HCT116 (cell line): ENCODE measurements at regions of chr11 and their contacts with region 1.

Region 1: GRCh38 chr11:10735481-10736475 is 15.3 kb upstream of the CTR9 start:
- DNase-seq: peak; percentile 96
- ATAC-seq: peak; percentile 95
- H3K4me3 ChIP-seq: peak overlapping the region; percentile 24 to 36
- H3K27ac ChIP-seq: peak overlapping the region; percentile 89
- H3K4me1 ChIP-seq: peaks cover 39 to 51% of the 10 kb centered on the region in 2 experiments
- H3K27me3 ChIP-seq: no peaks in the 10 kb centered on the region
- CTCF ChIP-seq: peak; percentile 95 to 99 (median 98)
- POLR2A ChIP-seq: no peak
- RAD21 ChIP-seq: peak; percentile 100

Region 2: DNA sequence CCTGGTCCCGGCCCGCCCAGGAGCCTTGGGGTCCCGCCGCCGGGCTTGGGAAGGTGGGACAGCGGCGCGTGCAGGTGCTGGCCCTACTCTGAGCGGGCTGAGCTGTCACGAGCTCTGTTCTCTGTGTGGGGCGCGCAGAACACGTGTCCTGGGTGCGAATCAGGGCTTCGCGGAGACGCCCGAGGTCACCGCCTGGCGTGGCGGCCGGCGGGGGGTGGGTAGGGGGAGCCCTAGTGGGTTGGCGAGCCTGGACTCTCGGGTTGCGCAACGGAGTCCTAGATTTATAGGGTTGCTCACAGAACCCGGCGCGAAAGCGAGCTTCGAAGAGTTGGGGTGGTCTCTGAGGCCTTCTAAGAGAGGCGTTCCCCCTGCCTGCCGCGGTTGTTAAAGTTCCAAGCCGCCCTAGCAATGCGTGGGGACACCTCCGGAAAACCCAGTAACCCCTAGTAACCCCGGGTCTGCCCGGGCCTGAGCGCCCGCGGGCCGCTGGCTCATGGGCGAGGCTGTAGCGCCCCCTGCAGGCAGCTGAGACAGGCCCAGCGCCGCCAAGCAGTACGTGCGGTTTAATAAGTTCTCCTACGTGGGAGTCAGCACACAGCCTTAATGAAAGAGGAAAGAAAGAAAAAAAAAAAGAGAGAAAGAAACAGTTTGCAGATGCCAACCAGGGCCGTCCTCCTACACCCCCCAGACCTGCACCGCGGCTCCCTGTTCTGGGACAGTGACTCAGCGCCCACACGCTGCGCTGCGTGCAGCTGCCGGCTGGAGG is 428.2 kb before region 1 on chr11:
- CTCF ChIA-PET with region 1: interaction called, 4 read pairs
- POLR2A ChIA-PET with region 1: no interaction called
- RAD21 ChIA-PET with region 1: interaction called in 1 of 2 experiments, 3 read pairs
- intact Hi-C with region 1: loop called (anchors 5 kb)
- DNase-seq: peak; percentile 84
- ATAC-seq: peak; percentile 41
- H3K4me3 ChIP-seq: peak overlapping the region; percentile 85 to 93
- H3K27ac ChIP-seq: peak overlapping the region; percentile 97
- H3K4me1 ChIP-seq: peaks cover 42 to 64% of the 10 kb centered on the region in 2 experiments
- H3K27me3 ChIP-seq: no peaks in the 10 kb centered on the region
- CTCF ChIP-seq: peak in 2 of 3 experiments; percentile 94 to 98; a peak in 4 of 6 replicates
- POLR2A ChIP-seq: peak; percentile 11
- RAD21 ChIP-seq: no peak

Region 3: GRCh38 chr11:10405855-10406592 is 329.8 kb before region 1 on chr11:
- CTCF ChIA-PET with region 1: interaction called, 18 read pairs
- POLR2A ChIA-PET with region 1: interaction called, 4 read pairs
- RAD21 ChIA-PET with region 1: interaction called, 5 to 7 read pairs
- intact Hi-C with region 1: loop called (anchors 1 kb)
- DNase-seq: peak; percentile 87
- ATAC-seq: peak; percentile 92
- H3K4me3 ChIP-seq: no peak overlapping the region
- H3K27ac ChIP-seq: peak overlapping the region; percentile 43; the same call in 1 of the 2 replicates
- H3K4me1 ChIP-seq: peaks cover 21 to 43% of the 10 kb centered on the region in 2 experiments
- H3K27me3 ChIP-seq: no peaks in the 10 kb centered on the region
- CTCF ChIP-seq: peak; percentile 78 to 98 (median 88)
- POLR2A ChIP-seq: no peak
- RAD21 ChIP-seq: peak; percentile 100

Region 4: DNA sequence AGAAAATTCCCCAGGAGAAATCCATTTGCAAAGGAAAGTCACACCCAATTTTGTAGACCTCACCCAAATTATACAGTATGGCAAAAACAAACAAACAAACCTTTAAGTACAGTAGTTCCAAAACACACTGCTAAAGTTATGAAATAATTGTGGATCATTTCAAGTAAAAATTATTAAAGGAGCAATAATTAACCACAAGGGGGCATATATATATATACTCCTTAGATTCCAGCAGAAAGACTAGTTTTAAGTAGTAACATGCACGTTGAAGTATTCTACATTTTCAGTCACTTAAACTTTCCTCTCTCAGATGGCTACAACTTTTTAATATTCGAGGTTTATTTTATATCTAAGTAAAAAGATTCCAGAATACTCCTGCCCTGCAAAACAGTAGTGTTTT is 221.6 kb before region 1 on chr11:
- CTCF ChIA-PET with region 1: interaction called, 4 read pairs
- POLR2A ChIA-PET with region 1: interaction called, 3 read pairs
- RAD21 ChIA-PET with region 1: no interaction called
- intact Hi-C with region 1: loop called (anchors 1 kb)
- DNase-seq: no peak
- ATAC-seq: no peak
- H3K4me3 ChIP-seq: no peak overlapping the region
- H3K27ac ChIP-seq: peak overlapping the region; percentile 63; the same call in 1 of the 2 replicates
- H3K4me1 ChIP-seq: peaks cover 23 to 55% of the 10 kb centered on the region in 2 experiments
- H3K27me3 ChIP-seq: no peaks in the 10 kb centered on the region
- CTCF ChIP-seq: peak; percentile 16 to 51 (median 39); a peak in 3 of 6 replicates
- POLR2A ChIP-seq: no peak
- RAD21 ChIP-seq: peak; percentile 47; the same call in 1 of the 2 replicates

Region 5: DNA sequence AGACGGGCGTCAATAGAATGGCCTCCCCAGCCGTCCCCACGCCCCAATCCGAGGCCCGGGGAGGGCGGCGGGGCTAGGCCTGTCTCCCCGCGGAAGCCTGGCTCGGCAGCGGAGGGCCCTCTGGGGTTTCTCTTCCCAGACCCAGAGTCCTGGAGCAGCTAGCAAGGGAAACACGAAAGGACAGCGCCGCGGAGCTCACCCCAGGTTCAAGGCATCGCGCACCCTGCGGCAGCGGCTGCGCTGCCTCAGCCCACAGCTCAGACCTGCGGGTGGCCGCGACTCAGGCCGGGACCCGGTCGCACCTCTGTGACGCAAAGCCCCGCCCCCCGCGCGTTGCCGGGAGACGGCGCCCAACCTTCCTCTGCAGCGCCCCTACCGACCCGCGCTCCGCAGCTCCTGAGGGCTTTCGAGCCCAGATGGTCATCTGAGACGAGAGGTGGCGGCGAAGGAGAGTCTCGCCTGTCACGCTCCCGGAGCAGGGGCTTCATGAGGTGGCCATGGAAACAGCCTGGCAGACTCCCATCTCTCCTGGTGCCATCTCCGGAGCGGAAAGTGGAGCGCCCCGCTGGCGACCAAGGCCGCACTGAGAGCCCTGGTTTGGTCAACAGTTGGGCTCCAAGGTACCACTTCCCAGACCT is 194.7 kb before region 1 on chr11 and contains the start of gene RNF141:
- CTCF ChIA-PET with region 1: interaction called, 12 read pairs
- POLR2A ChIA-PET with region 1: no interaction called
- RAD21 ChIA-PET with region 1: interaction called, 3 read pairs
- intact Hi-C with region 1: no loop called
- DNase-seq: peak; percentile 84
- ATAC-seq: peak; percentile 89
- H3K4me3 ChIP-seq: peak within 1 kb of the TSS; percentile 76 to 83
- H3K27ac ChIP-seq: peak within 1 kb of the TSS; percentile 94
- H3K4me1 ChIP-seq: peaks cover 40 to 54% of the 10 kb centered on the region in 2 experiments
- H3K27me3 ChIP-seq: no peaks in the 10 kb centered on the region
- CTCF ChIP-seq: peak; percentile 57 to 83 (median 67); a peak in 5 of 6 replicates
- POLR2A ChIP-seq: peak; percentile 91
- RAD21 ChIP-seq: peak; percentile 53
- total RNA-seq, gene RNF141: 133 TPM

Region 6: GRCh38 chr11:10659339-10660216 is 76.2 kb before region 1 on chr11:
- CTCF ChIA-PET with region 1: interaction called, 4 read pairs
- POLR2A ChIA-PET with region 1: interaction called, 3 read pairs
- RAD21 ChIA-PET with region 1: interaction called in 1 of 2 experiments, 3 read pairs
- intact Hi-C with region 1: loop called (anchors 1 kb)
- DNase-seq: peak; percentile 96
- ATAC-seq: peak; percentile 72
- H3K4me3 ChIP-seq: 0 out of 4 replicates have a peak overlapping the region, but pooled peaks of 1 of the 2 experiments have one; percentile 1
- H3K27ac ChIP-seq: peak overlapping the region; percentile 100
- H3K4me1 ChIP-seq: peaks cover 68 to 99% of the 10 kb centered on the region in 2 experiments
- H3K27me3 ChIP-seq: no peaks in the 10 kb centered on the region
- CTCF ChIP-seq: no peak
- POLR2A ChIP-seq: peak; percentile 55
- RAD21 ChIP-seq: no peak

Region 7: DNA sequence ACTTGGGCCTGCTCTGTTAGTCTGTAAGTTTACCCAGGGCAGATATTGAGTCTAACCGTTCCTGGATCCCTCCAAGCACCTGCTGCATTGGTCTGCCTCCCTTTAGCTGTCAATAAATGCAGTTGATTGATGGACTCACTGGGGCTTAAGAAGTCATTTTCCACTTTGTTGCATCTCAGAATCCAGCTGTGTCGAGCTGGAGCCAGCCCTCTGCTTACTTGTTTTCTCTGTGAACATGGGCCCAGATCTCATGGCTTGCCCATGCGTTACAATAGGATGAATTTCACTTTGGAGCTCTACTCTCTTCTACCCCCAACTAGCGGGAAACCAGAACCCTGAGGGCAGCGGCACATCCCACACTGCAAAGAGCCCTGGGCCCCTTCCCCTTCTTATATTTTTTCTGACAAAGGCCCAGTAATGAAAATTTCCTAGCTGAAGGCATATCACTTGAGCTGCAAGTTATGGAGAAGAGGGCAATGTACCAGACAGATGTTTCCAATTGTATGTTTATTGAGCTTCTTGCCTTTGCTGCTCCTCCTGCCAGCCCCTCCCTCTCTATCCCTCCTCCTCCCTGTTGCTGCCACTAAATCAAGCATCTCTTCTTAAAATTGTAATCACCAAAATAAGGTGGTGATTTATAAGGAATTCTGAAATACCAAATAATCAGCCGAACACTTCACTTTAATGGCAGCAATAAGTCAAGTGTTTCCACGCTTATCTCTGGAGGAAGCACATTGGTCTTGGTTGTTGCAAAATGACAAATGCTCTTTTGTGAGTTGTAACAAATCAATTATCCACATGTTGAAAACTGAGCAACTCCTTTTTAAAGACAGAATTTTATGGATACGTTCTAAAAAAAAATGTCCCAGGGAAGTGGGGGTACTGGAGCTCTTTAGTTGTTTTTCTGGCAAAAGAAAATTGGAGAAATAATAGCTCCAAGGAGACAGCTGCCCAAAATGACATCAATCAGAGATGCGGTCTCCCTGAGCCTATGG is 334.4 kb after region 1 on chr11:
- CTCF ChIA-PET with region 1: no interaction called
- POLR2A ChIA-PET with region 1: no interaction called
- RAD21 ChIA-PET with region 1: no interaction called
- intact Hi-C with region 1: no loop called
- DNase-seq: no peak
- ATAC-seq: no peak
- H3K4me3 ChIP-seq: no peak overlapping the region
- H3K27ac ChIP-seq: no peak overlapping the region
- H3K4me1 ChIP-seq: no peaks in the 10 kb centered on the region
- H3K27me3 ChIP-seq: no peaks in the 10 kb centered on the region
- CTCF ChIP-seq: no peak
- POLR2A ChIP-seq: no peak
- RAD21 ChIP-seq: no peak